ENCODE measurements at regions of chr6 and their contacts with region 1.

Region 1: DNA sequence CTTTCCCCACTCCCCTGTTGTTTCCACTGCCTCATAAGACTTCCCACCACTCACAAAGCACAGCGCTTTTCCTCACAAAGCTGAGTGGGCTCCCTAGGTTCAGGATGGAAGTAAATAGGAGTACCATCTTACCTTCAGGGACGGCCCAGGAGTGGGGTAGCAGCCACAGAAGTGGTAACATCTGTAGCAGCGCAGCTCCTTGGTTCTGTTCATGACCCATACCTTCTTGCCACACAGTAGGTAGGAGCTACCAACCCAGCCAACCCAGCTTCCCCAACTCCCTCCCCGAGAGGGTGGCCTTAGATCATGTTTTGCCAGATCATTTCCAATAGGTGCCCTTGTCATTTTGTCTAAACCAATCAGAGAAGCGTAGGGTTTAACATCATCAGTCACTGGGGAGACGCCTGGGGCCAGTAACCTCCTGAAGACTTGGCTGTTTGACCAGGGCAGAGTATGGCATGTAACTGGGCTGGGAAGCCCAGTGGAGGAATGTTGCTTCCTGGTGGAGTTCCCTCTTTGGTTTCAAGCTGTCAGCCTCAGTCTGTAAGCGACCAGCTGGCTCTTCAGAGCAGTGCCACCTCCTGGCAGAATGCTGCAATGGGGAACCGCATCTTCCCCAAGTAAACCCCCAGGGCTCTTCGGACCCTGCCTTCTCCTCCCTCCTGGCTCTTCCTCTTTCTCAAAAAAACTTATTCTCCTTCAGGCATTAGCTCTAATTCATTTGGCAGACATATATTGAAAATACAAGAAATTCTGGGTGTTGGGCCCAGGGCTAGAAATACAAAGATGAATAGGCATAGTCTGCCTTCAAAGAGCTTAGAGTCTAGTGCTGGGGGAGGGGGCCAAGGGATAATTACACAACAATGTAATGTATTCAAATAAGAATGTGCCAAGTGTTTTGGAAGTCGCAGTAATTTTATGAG is at the start of gene HLA-DMA:
- DNase-seq: peak; percentile 95
- H3K4me3 ChIP-seq: no peak within 1 kb of the TSS
- H3K27me3 ChIP-seq: no peaks in the 10 kb centered on the region
- CTCF ChIP-seq: peak; percentile 88
- polyA plus RNA-seq, gene HLA-DMA: 3.5 and 3.8 TPM in 2 replicates

Region 2: GRCh38 chr6:32885698-32886286 is 67.3 kb before region 1 on chr6:
- CTCF ChIA-PET with region 1: interaction called, 37 read pairs
- POLR2A ChIA-PET with region 1: no interaction called
- DNase-seq: peak; percentile 16
- H3K4me3 ChIP-seq: no peak overlapping the region
- H3K27me3 ChIP-seq: no peaks in the 10 kb centered on the region
- CTCF ChIP-seq: peak; percentile 45

Region 3: DNA sequence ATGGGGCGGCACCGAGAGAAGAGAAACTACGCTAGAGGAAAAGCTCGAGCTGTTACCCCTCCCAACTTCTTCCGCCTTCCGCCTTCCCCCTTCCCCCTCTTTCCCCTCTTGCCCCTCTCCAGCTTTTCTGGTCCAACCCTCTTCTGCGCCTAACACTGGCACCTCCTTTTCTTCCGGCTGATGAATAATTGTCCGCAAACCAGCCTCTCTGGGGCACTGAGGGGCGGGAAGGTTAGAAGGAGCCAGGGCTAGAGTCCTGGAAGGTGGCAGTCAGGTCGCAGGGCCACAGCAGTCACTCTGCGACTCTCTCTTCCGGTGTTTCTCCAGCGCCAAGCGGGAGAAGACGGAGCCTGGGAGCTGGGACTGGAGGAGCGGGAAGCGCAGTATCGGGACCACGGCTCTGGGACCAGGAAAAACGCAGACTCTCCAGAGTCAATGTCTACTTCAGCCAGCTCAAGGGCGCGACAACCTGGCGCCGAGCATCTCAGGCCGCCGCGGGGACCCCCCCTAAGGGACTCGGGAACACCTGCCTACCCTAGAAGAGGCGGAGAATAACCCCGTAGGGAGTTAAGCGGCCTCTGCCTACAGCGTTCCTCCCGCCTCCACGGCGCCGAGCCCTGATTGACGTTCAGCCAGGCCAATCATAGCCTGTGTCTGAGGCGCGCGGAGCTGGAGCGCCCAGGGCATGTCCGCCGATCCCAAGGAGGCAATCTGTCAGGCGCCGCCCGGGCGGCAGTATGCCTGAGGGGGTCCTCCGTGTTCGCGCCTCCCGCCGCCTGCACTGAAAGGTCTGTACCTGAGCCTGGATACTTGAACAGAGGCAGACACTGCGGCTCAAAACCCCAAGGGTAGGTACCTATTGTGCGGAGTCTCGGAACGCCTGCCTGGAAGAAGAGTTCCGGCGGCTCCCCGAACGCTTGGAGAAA is 58.7 kb before region 1 on chr6:
- CTCF ChIA-PET with region 1: interaction called, 11 read pairs
- POLR2A ChIA-PET with region 1: no interaction called
- DNase-seq: peak; percentile 61
- H3K4me3 ChIP-seq: peak overlapping the region; percentile 82
- H3K27me3 ChIP-seq: no peaks in the 10 kb centered on the region
- CTCF ChIP-seq: no peak

Region 4: GRCh38 chr6:32940656-32941213 is 12.3 kb before region 1 on chr6 and contains the start of gene HLA-DMB:
- CTCF ChIA-PET with region 1: interaction called, 38 read pairs
- POLR2A ChIA-PET with region 1: no interaction called
- DNase-seq: no peak
- H3K4me3 ChIP-seq: no peak within 1 kb of the TSS
- H3K27me3 ChIP-seq: peaks cover 23% of the 10 kb centered on the region
- CTCF ChIP-seq: no peak
- polyA plus RNA-seq, gene HLA-DMB: not detected in 2 replicates

Region 5: DNA sequence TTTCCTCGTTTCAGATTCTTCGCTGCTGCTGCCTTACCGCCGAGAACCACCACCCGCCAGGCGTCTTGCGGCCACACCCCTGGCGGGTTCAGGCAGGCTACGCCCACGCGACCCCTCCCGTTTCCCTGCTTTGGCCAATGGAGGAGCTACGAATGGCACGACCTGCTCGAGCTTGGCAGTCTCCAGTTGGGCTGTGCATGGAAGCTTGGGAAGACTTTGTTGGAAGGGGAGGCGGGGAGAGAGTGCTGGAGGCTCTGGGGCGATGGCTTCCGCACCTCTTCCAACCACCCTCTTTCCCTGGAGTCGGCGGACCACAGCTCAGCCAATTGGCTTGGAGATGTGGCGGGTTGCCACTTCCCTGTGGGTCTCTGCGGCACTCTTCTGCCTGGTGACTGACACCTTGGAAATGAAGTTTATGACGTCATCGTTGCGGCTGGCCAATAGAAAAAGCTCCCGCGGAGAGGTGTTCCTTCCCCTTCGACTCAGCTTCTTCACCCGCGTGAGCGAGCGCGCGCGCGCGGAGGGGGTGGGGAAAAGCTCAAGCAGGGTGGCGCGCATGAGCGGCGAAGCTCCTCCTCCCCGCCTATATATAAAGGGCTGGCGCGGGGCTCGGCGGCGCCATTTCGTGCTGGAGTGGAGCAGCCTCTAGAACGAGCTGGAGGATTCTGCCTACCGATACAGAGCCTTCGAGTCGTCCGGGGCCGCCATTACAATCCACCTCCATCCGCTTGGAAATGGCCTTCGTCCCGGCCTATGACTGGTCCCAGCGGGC is 18.7 kb after region 1 on chr6:
- CTCF ChIA-PET with region 1: interaction called, 61 read pairs
- POLR2A ChIA-PET with region 1: interaction called, 16 read pairs
- DNase-seq: peak; percentile 99
- H3K4me3 ChIP-seq: peak overlapping the region; percentile 94
- H3K27me3 ChIP-seq: no peaks in the 10 kb centered on the region
- CTCF ChIP-seq: no peak

Region 6: GRCh38 chr6:33599413-33599911 is 646.4 kb after region 1 on chr6:
- CTCF ChIA-PET with region 1: no interaction called
- POLR2A ChIA-PET with region 1: no interaction called
- DNase-seq: no peak
- H3K4me3 ChIP-seq: no peak overlapping the region
- H3K27me3 ChIP-seq: no peaks in the 10 kb centered on the region
- CTCF ChIP-seq: no peak

Measured in BJ (cell line).